PC-9 (cell line): ENCODE measurements at regions of chr12 and their contacts with region 1.

Region 1: DNA sequence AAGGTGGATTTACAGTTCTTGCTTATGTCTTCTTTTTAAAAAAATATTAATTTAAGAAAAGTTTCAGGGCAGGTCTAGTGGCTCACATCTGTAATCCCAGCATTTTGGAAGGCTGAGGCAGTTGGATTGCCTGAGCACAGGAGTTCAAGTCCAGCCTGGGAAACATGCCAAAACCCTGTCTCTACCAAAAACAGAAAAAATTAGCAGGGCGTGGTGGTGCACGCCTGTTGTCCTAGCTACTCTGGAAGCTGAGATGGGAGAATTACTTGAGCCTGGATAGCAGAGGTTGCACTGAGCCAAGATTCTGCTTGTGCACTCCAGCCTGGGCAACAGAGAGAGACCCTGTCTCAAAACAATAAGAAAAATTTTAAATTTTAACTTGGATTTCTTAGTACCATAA is 5.4 kb upstream of the TAS2R46 start:
- DNase-seq: no peak
- H3K4me3 ChIP-seq: no peak overlapping the region
- H3K27ac ChIP-seq: no peak overlapping the region
- H3K4me1 ChIP-seq: no peaks in the 10 kb centered on the region
- H3K27me3 ChIP-seq: no peaks in the 10 kb centered on the region
- CTCF ChIP-seq: no peak

Region 2: GRCh38 chr12:11015775-11016430 is 51.6 kb before region 1 on chr12:
- CTCF ChIA-PET with region 1: no interaction called
- POLR2A ChIA-PET with region 1: no interaction called
- intact Hi-C with region 1: loop called (anchors 1 kb)
- DNase-seq: peak in 1 of 2 experiments; percentile 4
- H3K4me3 ChIP-seq: no peak overlapping the region
- H3K27ac ChIP-seq: no peak overlapping the region
- H3K4me1 ChIP-seq: no peaks in the 10 kb centered on the region
- H3K27me3 ChIP-seq: no peaks in the 10 kb centered on the region
- CTCF ChIP-seq: no peak

Region 3: GRCh38 chr12:11039171-11039570 is 28.3 kb before region 1 on chr12:
- CTCF ChIA-PET with region 1: no interaction called
- POLR2A ChIA-PET with region 1: no interaction called
- intact Hi-C with region 1: loop called (anchors 1 kb)
- DNase-seq: no peak
- H3K4me3 ChIP-seq: no peak overlapping the region
- H3K27ac ChIP-seq: no peak overlapping the region
- H3K4me1 ChIP-seq: no peaks in the 10 kb centered on the region
- H3K27me3 ChIP-seq: no peaks in the 10 kb centered on the region
- CTCF ChIP-seq: no peak

Region 4: GRCh38 chr12:11408096-11408495 is 340.6 kb after region 1 on chr12:
- CTCF ChIA-PET with region 1: no interaction called
- POLR2A ChIA-PET with region 1: no interaction called
- intact Hi-C with region 1: no loop called
- DNase-seq: no peak
- H3K4me3 ChIP-seq: no peak overlapping the region
- H3K27ac ChIP-seq: no peak overlapping the region
- H3K4me1 ChIP-seq: no peaks in the 10 kb centered on the region
- H3K27me3 ChIP-seq: peaks cover 15% of the 10 kb centered on the region
- CTCF ChIP-seq: no peak